ENCODE measurements at regions of chr5 and their contacts with region 1.

Region 1: GRCh38 chr5:90251447-90251846 is 158.1 kb downstream of the CETN3 start:
- DNase-seq: no peak
- ATAC-seq: no peak

Region 2: GRCh38 chr5:90334741-90335140 is 83.3 kb after region 1 on chr5:
- intact Hi-C with region 1: loop called (anchors 2 kb)
- DNase-seq: no peak
- ATAC-seq: no peak

Measured in sciatic nerve (tissue), 2 donors.